ENCODE measurements at regions of chr21 and their contacts with region 1.

Region 1: GRCh38 chr21:38805328-38806152 is at the start of gene ETS2:
- DNase-seq: peak; percentile 93 to 96 (median 95)
- ATAC-seq: peak; percentile 88 to 94 (median 92)
- H3K4me3 ChIP-seq: peak within 1 kb of the TSS; percentile 67 to 99 (median 94)
- H3K27ac ChIP-seq: peak within 1 kb of the TSS; percentile 87 to 99 (median 98)
- H3K4me1 ChIP-seq: peaks cover 0 to 42% (median 17%) of the 10 kb centered on the region in 12 donors
- H3K27me3 ChIP-seq: no peaks in the 10 kb centered on the region
- CTCF ChIP-seq: peak in 3 of 12 donors; percentile 10 to 16 (median 13)
- POLR2A ChIP-seq: peak in 1 of 2 donors; percentile 93
- total RNA-seq, gene ETS2: 27.9 to 92.7 (median 45.1) TPM

Region 2: GRCh38 chr21:38505654-38506515 is 299.7 kb before region 1 on chr21:
- intact Hi-C with region 1: loop called in 1 of 10 experiments (anchors 10 kb)
- DNase-seq: peak in 1 of 5 donors; percentile 52
- ATAC-seq: peak; percentile 83 to 92 (median 84)
- H3K4me3 ChIP-seq: peak overlapping the region in 4 of 12 donors; percentile 1 to 39 (median 12)
- H3K27ac ChIP-seq: no peak overlapping the region
- H3K4me1 ChIP-seq: peaks cover 0 to 28% (median 6%) of the 10 kb centered on the region in 12 donors
- H3K27me3 ChIP-seq: no peaks in the 10 kb centered on the region
- CTCF ChIP-seq: peak; percentile 57 to 87 (median 73)
- POLR2A ChIP-seq: no peak

Region 3: DNA sequence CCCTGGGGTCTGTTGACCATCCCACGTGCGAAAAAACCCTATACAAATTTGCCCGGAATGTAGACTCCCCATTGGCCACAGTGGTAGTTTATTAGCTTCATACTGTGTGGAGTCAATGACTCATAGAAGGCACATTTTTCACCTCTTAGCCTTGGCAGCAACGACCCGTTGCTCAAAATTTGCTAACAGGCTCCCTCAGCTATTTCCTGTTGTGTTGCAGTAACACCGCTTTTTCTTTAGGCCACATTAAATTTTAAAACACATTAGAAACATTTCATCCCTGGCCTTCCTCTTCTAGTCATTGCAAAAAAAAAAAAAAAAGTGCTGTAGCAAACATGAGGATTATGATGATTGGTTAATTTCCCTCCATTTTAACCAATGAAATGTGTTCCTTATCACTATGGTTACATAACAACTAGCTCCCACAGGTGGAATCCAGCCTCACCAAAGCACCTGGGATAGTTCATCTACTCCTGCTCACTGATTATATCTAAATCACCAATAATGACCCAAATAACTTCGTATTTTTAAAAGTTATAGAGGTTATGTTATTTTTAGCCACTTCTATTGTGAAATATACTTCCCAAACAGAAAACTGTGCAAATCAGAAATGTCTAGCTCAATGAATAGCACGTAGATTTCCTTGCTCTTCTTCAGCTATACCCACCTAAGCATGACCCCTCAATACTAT is 49.7 kb before region 1 on chr21:
- intact Hi-C with region 1: loop called in 1 of 10 experiments (anchors 5 kb)
- DNase-seq: peak in 1 of 5 donors; percentile 26
- ATAC-seq: peak; percentile 28 to 80 (median 74)
- H3K4me3 ChIP-seq: no peak overlapping the region
- H3K27ac ChIP-seq: peak overlapping the region in 5 of 12 donors; percentile 6 to 63 (median 32)
- H3K4me1 ChIP-seq: peaks cover 0 to 78% (median 14%) of the 10 kb centered on the region in 12 donors
- H3K27me3 ChIP-seq: no peaks in the 10 kb centered on the region
- CTCF ChIP-seq: no peak
- POLR2A ChIP-seq: no peak

Region 4: DNA sequence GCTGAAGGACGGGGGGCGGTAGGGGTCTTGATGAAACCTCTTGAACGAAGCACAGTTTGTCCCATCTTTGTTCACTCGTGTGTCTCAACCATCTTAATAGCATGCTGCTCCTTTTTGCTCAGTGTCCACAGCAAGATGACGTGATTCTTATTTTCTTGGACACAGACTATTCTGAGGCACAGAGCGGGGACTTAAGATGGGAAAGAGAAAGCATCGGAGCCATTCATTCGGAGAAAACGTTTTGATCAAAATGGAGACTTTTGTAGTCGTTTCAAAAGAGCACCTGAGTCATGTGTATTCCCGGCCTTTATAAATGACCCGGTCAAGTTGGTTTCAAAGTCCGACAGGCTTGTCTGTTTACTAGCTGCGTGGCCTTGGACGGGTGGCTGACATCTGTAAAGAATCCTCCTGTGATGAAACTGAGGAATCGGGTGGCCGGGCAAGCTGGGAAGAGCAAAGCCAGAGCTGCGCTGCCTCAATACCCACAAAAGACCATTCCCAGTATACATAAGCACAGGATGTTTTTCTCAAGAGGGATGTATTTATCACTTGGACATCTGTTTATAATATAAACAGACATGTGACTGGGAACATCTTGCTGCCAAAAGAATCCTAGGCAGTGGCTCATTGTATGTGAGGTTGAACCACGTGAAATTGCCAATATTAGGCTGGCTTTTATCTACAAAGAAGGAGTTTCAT is 18.7 kb after region 1 on chr21:
- intact Hi-C with region 1: no loop called
- DNase-seq: no peak
- ATAC-seq: peak in 2 of 4 donors; percentile 9 to 41
- H3K4me3 ChIP-seq: no peak overlapping the region
- H3K27ac ChIP-seq: peak overlapping the region; percentile 20 to 79 (median 67)
- H3K4me1 ChIP-seq: peaks cover 3 to 59% (median 31%) of the 10 kb centered on the region in 12 donors
- H3K27me3 ChIP-seq: no peaks in the 10 kb centered on the region
- CTCF ChIP-seq: no peak
- POLR2A ChIP-seq: no peak

Region 5: GRCh38 chr21:38999161-38999560 is 193.6 kb after region 1 on chr21:
- intact Hi-C with region 1: loop called in 6 of 10 experiments (anchors 5 kb)
- DNase-seq: no peak
- ATAC-seq: no peak
- H3K4me3 ChIP-seq: no peak overlapping the region
- H3K27ac ChIP-seq: peak overlapping the region in 2 of 12 donors; percentile 44 to 72
- H3K4me1 ChIP-seq: peaks cover 0 to 83% (median 60%) of the 10 kb centered on the region in 12 donors
- H3K27me3 ChIP-seq: no peaks in the 10 kb centered on the region
- CTCF ChIP-seq: no peak
- POLR2A ChIP-seq: no peak

Region 6: DNA sequence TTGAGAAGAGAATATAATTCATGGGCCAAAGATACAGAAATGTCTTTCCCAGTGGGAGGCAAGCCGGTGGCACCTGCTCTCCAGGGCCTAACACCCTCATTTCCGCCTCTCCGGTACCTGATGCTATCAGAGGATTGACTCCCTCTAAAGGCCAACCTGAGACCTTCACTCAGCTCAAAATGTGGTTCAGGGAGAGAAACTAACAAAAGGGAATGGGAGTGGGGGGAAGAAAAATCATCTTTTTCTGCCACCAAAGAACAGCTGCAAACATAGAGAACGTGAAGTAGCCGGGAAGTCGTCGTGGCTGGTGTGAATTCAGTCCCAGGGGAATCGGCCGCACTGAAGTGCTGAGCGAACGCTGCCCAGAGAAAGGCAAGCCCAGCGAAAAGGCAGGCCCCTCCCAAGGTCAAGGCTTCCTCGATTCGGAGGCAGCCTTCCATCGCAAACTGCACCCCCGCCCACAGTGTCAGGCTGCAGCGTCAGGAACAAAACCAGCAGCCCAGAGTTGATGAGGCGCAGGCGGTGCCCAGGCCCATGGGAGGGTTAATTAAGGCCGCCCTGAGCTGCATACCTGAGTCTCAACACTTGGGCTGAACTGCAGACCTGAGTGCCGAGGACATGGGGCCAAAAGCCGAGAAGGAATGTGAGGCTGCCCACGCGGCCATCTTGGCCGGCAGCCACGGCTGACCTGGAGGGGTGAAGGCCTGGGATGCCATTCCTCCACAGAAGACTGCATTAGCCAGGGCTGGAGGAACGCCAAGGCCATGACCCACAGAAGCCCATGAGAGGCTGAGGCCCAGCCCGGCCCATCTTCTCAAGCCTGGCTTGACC is 217.5 kb after region 1 on chr21:
- intact Hi-C with region 1: loop called in 2 of 10 experiments (anchors 10 kb)
- DNase-seq: peak; percentile 78 to 89 (median 83)
- ATAC-seq: peak; percentile 80 to 92 (median 83)
- H3K4me3 ChIP-seq: peak overlapping the region in 2 of 12 donors; percentile 5 to 8
- H3K27ac ChIP-seq: peak overlapping the region; percentile 18 to 85 (median 75)
- H3K4me1 ChIP-seq: peaks cover 0 to 42% (median 31%) of the 10 kb centered on the region in 12 donors
- H3K27me3 ChIP-seq: no peaks in the 10 kb centered on the region
- CTCF ChIP-seq: peak in 9 of 12 donors; percentile 14 to 54 (median 30)
- POLR2A ChIP-seq: no peak

Region 7: GRCh38 chr21:39125752-39126485 is 320.4 kb after region 1 on chr21:
- intact Hi-C with region 1: loop called (anchors 1 to 10 kb)
- DNase-seq: peak in 4 of 5 donors; percentile 46 to 62 (median 59)
- ATAC-seq: peak; percentile 64 to 98 (median 95)
- H3K4me3 ChIP-seq: no peak overlapping the region
- H3K27ac ChIP-seq: peak overlapping the region in 2 of 12 donors; percentile 10 to 48
- H3K4me1 ChIP-seq: peaks cover 0 to 19% (median 7%) of the 10 kb centered on the region in 12 donors
- H3K27me3 ChIP-seq: no peaks in the 10 kb centered on the region
- CTCF ChIP-seq: peak; percentile 48 to 76 (median 63)
- POLR2A ChIP-seq: no peak

Measured in heart left ventricle (tissue), 16 donors.